Naive thymus-derived CD8-positive, alpha-beta T cell (primary cell): ENCODE measurements at regions of chr16 and their contacts with region 1.

Region 1: GRCh38 chr16:381789-382717 is at the start of gene PGAP6:
- DNase-seq: peak; percentile 21 to 79 (median 64)
- ATAC-seq: peak; percentile 46 to 55
- H3K4me3 Mint-ChIP-seq: peak within 1 kb of the TSS; percentile 87 to 96 (median 93)
- H3K27ac Mint-ChIP-seq: peak within 1 kb of the TSS; percentile 80 to 97 (median 90)
- H3K4me1 Mint-ChIP-seq: peaks cover 10 to 31% (median 27%) of the 10 kb centered on the region in 4 donors
- H3K27me3 Mint-ChIP-seq: no peaks in the 10 kb centered on the region
- polyA plus RNA-seq, gene PGAP6: 19.5 to 38.1 (median 22.0) TPM

Region 2: GRCh38 chr16:370443-370842 is 11.6 kb before region 1 on chr16 and contains the start of gene MRPL28:
- POLR2A ChIA-PET with region 1: interaction called, 61 read pairs
- DNase-seq: peak; percentile 83 to 97 (median 92)
- ATAC-seq: peak; percentile 99
- H3K4me3 Mint-ChIP-seq: peak within 1 kb of the TSS; percentile 82 to 97 (median 90)
- H3K27ac Mint-ChIP-seq: peak within 1 kb of the TSS; percentile 85 to 96 (median 89)
- H3K4me1 Mint-ChIP-seq: peaks cover 5 to 24% (median 15%) of the 10 kb centered on the region in 4 donors
- H3K27me3 Mint-ChIP-seq: no peaks in the 10 kb centered on the region
- polyA plus RNA-seq, gene MRPL28: 57.4 to 66.6 (median 64.7) TPM

Region 3: DNA sequence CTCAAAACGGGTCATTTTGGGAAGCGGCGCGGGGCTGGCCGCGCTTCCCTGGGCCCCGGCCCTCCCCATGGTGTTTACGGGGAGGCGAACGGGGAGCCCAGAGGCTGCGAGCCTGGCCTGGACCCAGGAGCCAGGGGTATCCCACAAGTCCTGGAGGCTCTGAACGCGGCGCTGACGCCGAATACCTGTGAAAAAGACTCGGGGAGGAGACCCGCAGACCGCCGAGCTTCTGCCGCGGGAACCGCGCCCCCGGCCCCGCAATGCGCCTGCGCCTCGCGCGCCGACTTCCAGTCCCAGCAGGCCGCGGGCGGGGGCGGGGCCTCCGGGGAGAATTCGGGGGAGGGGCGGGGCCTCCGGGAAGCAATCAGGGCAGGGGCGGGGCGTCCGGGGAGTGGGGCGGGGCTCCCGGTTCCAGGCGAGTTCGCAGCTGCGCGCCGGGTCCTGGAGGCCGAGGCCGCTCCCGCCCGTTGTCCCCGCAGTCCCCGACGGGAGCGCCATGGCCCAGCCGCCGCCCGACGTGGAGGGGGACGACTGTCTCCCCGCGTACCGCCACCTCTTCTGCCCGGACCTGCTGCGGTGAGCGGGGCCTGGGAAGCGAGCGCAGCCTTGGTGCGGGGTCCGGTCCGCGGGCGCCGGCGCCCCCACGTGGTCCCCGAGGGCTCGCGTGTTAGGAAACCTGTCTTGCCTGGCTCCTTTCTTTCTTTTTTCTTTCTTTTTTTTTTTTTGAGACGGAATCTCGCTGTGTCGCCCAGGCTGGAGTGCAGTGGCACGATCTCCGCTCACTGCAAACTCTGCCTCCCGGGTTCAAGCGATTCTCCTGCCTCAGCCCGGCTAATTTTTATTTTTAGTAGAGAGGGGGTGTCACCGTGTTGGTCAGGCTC is 19.7 kb after region 1 on chr16 and contains the start of gene DECR2:
- POLR2A ChIA-PET with region 1: interaction called, 72 read pairs
- DNase-seq: peak; percentile 90 to 100 (median 96)
- ATAC-seq: peak; percentile 78
- H3K4me3 Mint-ChIP-seq: peak within 1 kb of the TSS; percentile 85 to 95 (median 90)
- H3K27ac Mint-ChIP-seq: peak within 1 kb of the TSS; percentile 68 to 98 (median 96)
- H3K4me1 Mint-ChIP-seq: peaks cover 6 to 21% (median 17%) of the 10 kb centered on the region in 4 donors
- H3K27me3 Mint-ChIP-seq: no peaks in the 10 kb centered on the region
- polyA plus RNA-seq, gene DECR2: 7.4 to 12.2 (median 8.5) TPM

Region 4: DNA sequence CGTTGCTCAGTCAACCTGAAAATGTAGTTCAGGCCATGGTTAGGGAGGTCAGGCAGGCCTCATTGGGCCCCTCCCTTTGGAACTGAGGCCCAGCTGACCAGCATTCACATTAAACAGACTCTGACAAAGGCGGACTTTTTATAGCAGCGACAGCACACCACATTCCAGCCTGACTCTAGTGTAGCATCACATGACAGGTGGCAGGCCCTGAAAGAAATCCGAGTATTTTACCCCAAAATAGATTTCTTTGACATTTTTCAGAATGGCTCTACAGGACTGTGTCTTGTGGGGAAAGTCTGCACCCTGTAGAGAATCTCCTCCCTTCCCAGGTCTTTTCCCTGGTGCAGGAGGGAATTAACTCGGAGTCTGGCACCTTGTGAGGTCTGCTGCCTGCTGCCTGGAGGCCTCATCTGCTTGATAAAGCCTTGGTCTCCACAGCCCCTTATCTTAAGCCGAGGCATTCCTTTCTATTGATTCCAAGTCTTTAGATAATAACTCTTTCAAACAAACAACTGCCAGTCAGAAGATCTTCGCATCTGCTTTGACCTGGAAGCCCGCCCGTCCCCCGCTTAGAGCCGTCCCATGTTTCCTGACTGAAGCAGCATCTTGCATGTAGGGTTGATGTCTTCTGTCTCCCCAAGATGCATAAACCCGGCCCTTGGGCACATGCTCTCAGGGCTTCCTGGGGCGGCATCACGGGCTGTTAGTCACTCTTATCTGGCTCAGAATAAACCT is 101.5 kb after region 1 on chr16:
- POLR2A ChIA-PET with region 1: no interaction called
- DNase-seq: no peak
- ATAC-seq: no peak
- H3K4me3 Mint-ChIP-seq: no peak overlapping the region
- H3K27ac Mint-ChIP-seq: peak overlapping the region in 1 of 10 donors; percentile 48
- H3K4me1 Mint-ChIP-seq: peaks cover 0 to 3% (median 0%) of the 10 kb centered on the region in 4 donors
- H3K27me3 Mint-ChIP-seq: no peaks in the 10 kb centered on the region